ENCODE measurements at regions of chr6 and their contacts with region 1.

Region 1: DNA sequence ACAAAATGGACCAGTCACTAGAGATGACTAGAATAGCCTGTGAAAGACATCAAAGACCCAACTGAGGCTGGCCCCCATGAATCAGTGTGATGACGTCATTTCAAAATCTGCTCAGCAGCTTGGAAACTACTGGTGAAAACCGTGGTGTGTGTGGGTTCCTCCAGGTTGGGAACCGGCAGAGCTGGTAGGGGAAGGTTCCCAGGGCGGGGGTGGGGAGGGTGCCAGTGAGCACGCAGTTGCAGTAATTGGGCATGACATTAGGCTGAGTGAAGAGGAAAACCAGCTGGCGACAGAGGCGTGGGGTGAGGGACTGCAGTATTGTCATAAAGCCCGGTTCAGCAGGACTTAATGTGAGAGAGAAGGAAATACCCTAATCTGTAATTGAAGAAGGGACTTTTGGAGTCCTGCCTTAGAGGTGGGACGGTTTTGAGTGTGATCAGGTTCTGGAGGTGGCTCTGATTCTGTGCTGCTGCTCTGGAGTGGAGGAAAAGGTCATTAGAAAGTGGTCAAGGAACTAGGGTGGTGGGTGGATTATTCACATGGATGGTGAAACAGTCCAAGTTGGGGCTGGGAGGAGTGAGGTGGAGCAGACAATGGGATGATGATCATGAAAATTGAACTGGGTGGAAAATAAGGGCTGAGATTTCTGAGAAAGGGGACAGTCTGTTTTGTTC is 52.0 kb upstream of the MTHFD1L start:
- DNase-seq: peak in 2 of 14 experiments; percentile 30 to 43
- ATAC-seq: no peak
- H3K4me3 ChIP-seq: no peak overlapping the region
- H3K4me3 Mint-ChIP-seq: no peak overlapping the region
- H3K27ac ChIP-seq: no peak overlapping the region
- H3K27ac Mint-ChIP-seq: no peak overlapping the region
- H3K4me1 ChIP-seq: peaks cover 3% of the 10 kb centered on the region
- H3K4me1 Mint-ChIP-seq: no peaks in the 10 kb centered on the region
- H3K27me3 ChIP-seq: no peaks in the 10 kb centered on the region
- H3K27me3 Mint-ChIP-seq: peaks cover 12% of the 10 kb centered on the region
- CTCF ChIP-seq: no peak

Region 2: GRCh38 chr6:149834513-149835481 is 978.7 kb before region 1 on chr6:
- CTCF ChIA-PET with region 1: no interaction called
- POLR2A ChIA-PET with region 1: no interaction called
- intact Hi-C with region 1: loop called in 1 of 2 experiments (anchors 10 kb)
- DNase-seq: peak; percentile 41 to 85 (median 71)
- ATAC-seq: peak; percentile 86
- H3K4me3 ChIP-seq: no peak overlapping the region
- H3K4me3 Mint-ChIP-seq: no peak overlapping the region
- H3K27ac ChIP-seq: no peak overlapping the region
- H3K27ac Mint-ChIP-seq: no peak overlapping the region
- H3K4me1 ChIP-seq: no peaks in the 10 kb centered on the region
- H3K4me1 Mint-ChIP-seq: peaks cover 5% of the 10 kb centered on the region
- H3K27me3 ChIP-seq: no peaks in the 10 kb centered on the region
- H3K27me3 Mint-ChIP-seq: no peaks in the 10 kb centered on the region
- CTCF ChIP-seq: peak; percentile 93

Region 3: GRCh38 chr6:149934249-149935156 is 879.0 kb before region 1 on chr6:
- CTCF ChIA-PET with region 1: no interaction called
- POLR2A ChIA-PET with region 1: no interaction called
- intact Hi-C with region 1: loop called in 1 of 2 experiments (anchors 5 kb)
- DNase-seq: peak; percentile 50 to 88 (median 66)
- ATAC-seq: peak; percentile 67
- H3K4me3 ChIP-seq: no peak overlapping the region
- H3K4me3 Mint-ChIP-seq: peak overlapping the region; percentile 7
- H3K27ac ChIP-seq: no peak overlapping the region
- H3K27ac Mint-ChIP-seq: no peak overlapping the region
- H3K4me1 ChIP-seq: peaks cover 20% of the 10 kb centered on the region
- H3K4me1 Mint-ChIP-seq: peaks cover 14% of the 10 kb centered on the region
- H3K27me3 ChIP-seq: peaks cover 56 to 85% of the 10 kb centered on the region in 2 experiments
- H3K27me3 Mint-ChIP-seq: peaks cover 91% of the 10 kb centered on the region
- CTCF ChIP-seq: peak; percentile 89

Region 4: DNA sequence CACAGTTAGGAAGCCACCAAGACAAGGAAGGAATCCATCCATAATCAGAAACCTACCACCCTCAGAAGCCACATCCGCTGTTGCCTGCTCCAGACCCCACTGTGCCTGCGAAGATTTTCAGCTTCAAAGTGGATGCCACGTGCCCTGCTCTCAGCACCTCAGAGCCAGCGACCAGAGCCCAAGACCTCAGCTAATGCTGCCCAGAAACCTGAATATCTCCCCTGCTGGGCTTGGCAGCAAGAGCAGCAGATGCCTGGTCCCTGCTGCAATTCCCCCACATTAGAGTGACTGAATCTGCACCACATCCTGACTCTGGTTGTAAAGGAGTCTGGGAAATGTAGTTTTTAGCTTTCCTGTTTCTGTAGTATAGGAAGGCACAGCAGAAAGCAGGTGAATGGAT is 733.9 kb before region 1 on chr6:
- CTCF ChIA-PET with region 1: interaction called, 11 read pairs
- POLR2A ChIA-PET with region 1: no interaction called
- intact Hi-C with region 1: loop called (anchors 1 kb)
- DNase-seq: peak in 5 of 14 experiments; percentile 19 to 64 (median 61)
- ATAC-seq: peak; percentile 75
- H3K4me3 ChIP-seq: no peak overlapping the region
- H3K4me3 Mint-ChIP-seq: peak overlapping the region; percentile 74
- H3K27ac ChIP-seq: no peak overlapping the region
- H3K27ac Mint-ChIP-seq: no peak overlapping the region
- H3K4me1 ChIP-seq: peaks cover 13% of the 10 kb centered on the region
- H3K4me1 Mint-ChIP-seq: peaks cover 25% of the 10 kb centered on the region
- H3K27me3 ChIP-seq: peaks cover 0 to 3% of the 10 kb centered on the region in 2 experiments
- H3K27me3 Mint-ChIP-seq: peaks cover 34% of the 10 kb centered on the region
- CTCF ChIP-seq: no peak

Region 5: GRCh38 chr6:150377211-150377781 is 436.2 kb before region 1 on chr6:
- CTCF ChIA-PET with region 1: no interaction called
- POLR2A ChIA-PET with region 1: no interaction called
- intact Hi-C with region 1: no loop called
- DNase-seq: no peak
- ATAC-seq: no peak
- H3K4me3 ChIP-seq: no peak overlapping the region
- H3K4me3 Mint-ChIP-seq: no peak overlapping the region
- H3K27ac ChIP-seq: no peak overlapping the region
- H3K27ac Mint-ChIP-seq: no peak overlapping the region
- H3K4me1 ChIP-seq: no peaks in the 10 kb centered on the region
- H3K4me1 Mint-ChIP-seq: no peaks in the 10 kb centered on the region
- H3K27me3 ChIP-seq: peaks cover 0 to 4% of the 10 kb centered on the region in 2 experiments
- H3K27me3 Mint-ChIP-seq: peaks cover 17% of the 10 kb centered on the region
- CTCF ChIP-seq: no peak

Region 6: DNA sequence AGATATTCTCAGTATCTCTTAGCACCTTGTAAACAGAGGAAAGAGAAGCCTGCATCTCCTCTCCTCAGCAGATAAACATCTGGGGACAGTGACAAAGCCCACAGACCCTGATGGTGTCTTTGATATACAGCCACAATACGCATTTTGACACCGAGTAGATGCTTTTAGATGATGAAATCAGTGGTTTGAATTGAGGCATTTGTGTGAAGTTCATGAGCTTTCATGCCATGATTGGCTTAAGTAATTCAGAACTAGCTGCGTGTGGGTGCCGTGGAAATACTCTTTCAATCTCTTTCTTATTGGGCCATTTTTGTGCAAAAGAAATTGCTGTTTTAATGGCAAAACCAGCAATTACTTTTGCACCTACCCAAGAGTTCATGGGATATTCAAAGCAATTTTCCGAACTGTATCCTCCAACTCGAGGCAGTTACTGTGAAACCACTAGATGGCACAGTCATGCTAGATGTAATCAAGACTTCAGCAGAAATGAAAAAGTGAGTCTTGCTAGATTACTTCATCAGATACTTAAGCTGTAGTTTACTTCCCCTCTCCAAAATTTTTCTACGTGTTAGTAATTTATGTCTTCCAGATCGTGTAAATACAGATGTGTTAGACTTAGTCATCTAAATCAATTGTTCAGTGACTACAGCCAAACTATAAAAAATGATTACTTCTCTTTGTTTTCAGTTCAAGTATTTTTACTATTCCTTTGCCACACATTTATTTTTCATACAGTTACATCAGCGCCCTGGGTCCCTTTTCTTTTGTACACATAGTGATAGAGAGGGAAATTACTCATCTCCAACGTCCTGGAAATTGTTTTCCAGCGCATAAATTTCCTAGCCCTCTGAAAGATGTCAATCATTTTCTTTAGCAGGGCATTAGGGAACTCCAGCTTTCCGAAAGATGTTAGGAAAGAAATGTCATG is 395.3 kb before region 1 on chr6:
- CTCF ChIA-PET with region 1: interaction called, 28 read pairs
- POLR2A ChIA-PET with region 1: interaction called, 9 read pairs
- intact Hi-C with region 1: loop called (anchors 1 kb)
- DNase-seq: peak in 4 of 14 experiments; percentile 16 to 70 (median 66)
- ATAC-seq: peak; percentile 59
- H3K4me3 ChIP-seq: peak overlapping the region; percentile 38
- H3K4me3 Mint-ChIP-seq: peak overlapping the region; percentile 78
- H3K27ac ChIP-seq: no peak overlapping the region
- H3K27ac Mint-ChIP-seq: no peak overlapping the region
- H3K4me1 ChIP-seq: peaks cover 5% of the 10 kb centered on the region
- H3K4me1 Mint-ChIP-seq: peaks cover 6% of the 10 kb centered on the region
- H3K27me3 ChIP-seq: peaks cover 7 to 16% of the 10 kb centered on the region in 2 experiments
- H3K27me3 Mint-ChIP-seq: peaks cover 43% of the 10 kb centered on the region
- CTCF ChIP-seq: peak; percentile 47

Region 7: GRCh38 chr6:150685860-150686259 is 127.6 kb before region 1 on chr6:
- CTCF ChIA-PET with region 1: no interaction called
- POLR2A ChIA-PET with region 1: no interaction called
- intact Hi-C with region 1: loop called in 1 of 2 experiments (anchors 10 kb)
- DNase-seq: peak in 13 of 14 experiments; percentile 6 to 61 (median 24)
- ATAC-seq: peak; percentile 44
- H3K4me3 ChIP-seq: no peak overlapping the region
- H3K4me3 Mint-ChIP-seq: no peak overlapping the region
- H3K27ac ChIP-seq: no peak overlapping the region
- H3K27ac Mint-ChIP-seq: no peak overlapping the region
- H3K4me1 ChIP-seq: no peaks in the 10 kb centered on the region
- H3K4me1 Mint-ChIP-seq: no peaks in the 10 kb centered on the region
- H3K27me3 ChIP-seq: no peaks in the 10 kb centered on the region
- H3K27me3 Mint-ChIP-seq: no peaks in the 10 kb centered on the region
- CTCF ChIP-seq: peak; percentile 36

Region 8: GRCh38 chr6:150753371-150754064 is 59.9 kb before region 1 on chr6:
- CTCF ChIA-PET with region 1: no interaction called
- POLR2A ChIA-PET with region 1: no interaction called
- intact Hi-C with region 1: no loop called
- DNase-seq: no peak
- ATAC-seq: no peak
- H3K4me3 ChIP-seq: no peak overlapping the region
- H3K4me3 Mint-ChIP-seq: no peak overlapping the region
- H3K27ac ChIP-seq: no peak overlapping the region
- H3K27ac Mint-ChIP-seq: no peak overlapping the region
- H3K4me1 ChIP-seq: no peaks in the 10 kb centered on the region
- H3K4me1 Mint-ChIP-seq: no peaks in the 10 kb centered on the region
- H3K27me3 ChIP-seq: no peaks in the 10 kb centered on the region
- H3K27me3 Mint-ChIP-seq: no peaks in the 10 kb centered on the region
- CTCF ChIP-seq: no peak